ENCODE measurements at regions of chrX and their contacts with region 1.

Region 1: GRCh38 chrX:103585411-103586313 is at the start of gene TCEAL4:
- DNase-seq: peak; percentile 54 to 83 (median 68)
- H3K4me3 ChIP-seq: peak within 1 kb of the TSS; percentile 16 to 80 (median 64)
- H3K27ac ChIP-seq: peak within 1 kb of the TSS; percentile 41 to 92 (median 86)
- H3K27me3 ChIP-seq: peaks cover 0 to 33% (median 0%) of the 10 kb centered on the region in 45 donors
- CTCF ChIP-seq: no peak
- total RNA-seq, gene TCEAL4: 75.8 to 142 (median 106) TPM

Region 2: DNA sequence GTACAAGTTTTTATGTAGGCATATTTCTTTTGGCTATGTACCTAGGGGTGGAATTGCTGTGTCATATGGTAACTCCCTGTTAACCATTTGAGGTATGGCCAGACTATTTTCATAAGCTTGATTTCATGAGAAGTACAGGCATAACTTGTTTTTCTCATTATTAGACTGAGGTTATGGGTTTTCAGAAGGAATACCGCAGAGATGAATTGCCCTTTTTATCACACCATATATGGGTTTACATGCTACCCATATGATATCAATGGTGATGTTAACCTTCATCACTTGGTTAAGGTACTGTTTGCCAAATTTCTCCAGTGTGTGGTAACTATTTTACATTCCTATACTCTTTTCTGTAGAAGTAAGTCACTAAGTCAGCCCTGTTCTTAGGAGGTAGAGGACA is 89.9 kb before region 1 on chrX:
- intact Hi-C with region 1: no loop called
- DNase-seq: no peak
- H3K4me3 ChIP-seq: no peak overlapping the region
- H3K27ac ChIP-seq: no peak overlapping the region
- H3K27me3 ChIP-seq: peaks cover 0 to 61% (median 9%) of the 10 kb centered on the region in 45 donors
- CTCF ChIP-seq: no peak

Region 3: GRCh38 chrX:103607364-103608305 is 22.0 kb after region 1 on chrX and contains the start of gene TCEAL3:
- intact Hi-C with region 1: loop called in 1 of 2 experiments (anchors 2 kb)
- DNase-seq: peak; percentile 59 to 79 (median 64)
- H3K4me3 ChIP-seq: peak within 1 kb of the TSS; percentile 33 to 83 (median 69)
- H3K27ac ChIP-seq: peak within 1 kb of the TSS; percentile 43 to 95 (median 89)
- H3K27me3 ChIP-seq: peaks cover 0 to 87% (median 38%) of the 10 kb centered on the region in 45 donors
- CTCF ChIP-seq: no peak
- total RNA-seq, gene TCEAL3: 56.2 to 103 (median 76.7) TPM

Region 4: DNA sequence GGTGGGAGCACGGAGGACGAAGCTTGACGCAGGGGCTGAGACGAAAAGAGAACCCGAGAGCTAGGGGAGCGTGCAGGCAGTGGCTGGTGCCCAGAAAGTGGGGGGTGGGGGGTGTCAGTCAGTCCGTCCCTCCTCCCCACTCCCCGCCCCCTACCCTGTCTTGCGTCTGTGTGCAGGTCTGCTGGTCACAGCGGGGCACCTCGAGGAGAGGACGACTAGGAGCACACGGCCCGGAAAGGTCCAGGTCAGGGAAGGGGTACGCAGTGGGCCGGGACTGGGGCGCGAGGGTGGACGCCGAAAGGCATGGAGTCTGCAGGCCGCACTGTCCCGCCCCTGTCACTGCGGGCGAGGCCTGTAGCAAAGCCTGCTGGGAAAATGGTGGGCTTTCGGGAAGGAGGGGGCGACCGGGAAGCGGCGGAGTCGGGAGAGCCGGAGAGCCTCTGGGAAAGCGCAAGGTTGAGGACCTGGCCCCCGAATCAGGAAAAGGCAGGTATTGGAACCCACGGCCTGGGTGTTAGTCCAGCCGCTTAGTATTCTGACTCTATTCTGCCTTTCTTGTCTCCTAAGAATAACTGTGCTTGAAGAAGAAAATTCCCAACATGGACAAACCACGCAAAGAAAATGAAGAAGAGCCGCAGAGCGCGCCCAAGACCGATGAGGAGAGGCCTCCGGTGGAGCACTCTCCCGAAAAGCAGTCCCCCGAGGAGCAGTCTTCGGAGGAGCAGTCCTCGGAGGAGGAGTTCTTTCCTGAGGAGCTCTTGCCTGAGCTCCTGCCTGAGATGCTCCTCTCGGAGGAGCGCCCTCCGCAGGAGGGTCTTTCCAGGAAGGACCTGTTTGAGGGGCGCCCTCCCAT is 43.9 kb after region 1 on chrX:
- intact Hi-C with region 1: loop called in 1 of 2 experiments (anchors 2 kb)
- DNase-seq: peak; percentile 48 to 77 (median 67)
- H3K4me3 ChIP-seq: peak overlapping the region; percentile 45 to 76 (median 64)
- H3K27ac ChIP-seq: peak overlapping the region; percentile 80 to 98 (median 94)
- H3K27me3 ChIP-seq: peaks cover 0 to 71% (median 17%) of the 10 kb centered on the region in 45 donors
- CTCF ChIP-seq: peak in 55 of 56 donors; percentile 29 to 70 (median 56)